Esophagus squamous epithelium (tissue), 5 donors: ENCODE measurements at regions of chr21 and their contacts with region 1.

Region 1: DNA sequence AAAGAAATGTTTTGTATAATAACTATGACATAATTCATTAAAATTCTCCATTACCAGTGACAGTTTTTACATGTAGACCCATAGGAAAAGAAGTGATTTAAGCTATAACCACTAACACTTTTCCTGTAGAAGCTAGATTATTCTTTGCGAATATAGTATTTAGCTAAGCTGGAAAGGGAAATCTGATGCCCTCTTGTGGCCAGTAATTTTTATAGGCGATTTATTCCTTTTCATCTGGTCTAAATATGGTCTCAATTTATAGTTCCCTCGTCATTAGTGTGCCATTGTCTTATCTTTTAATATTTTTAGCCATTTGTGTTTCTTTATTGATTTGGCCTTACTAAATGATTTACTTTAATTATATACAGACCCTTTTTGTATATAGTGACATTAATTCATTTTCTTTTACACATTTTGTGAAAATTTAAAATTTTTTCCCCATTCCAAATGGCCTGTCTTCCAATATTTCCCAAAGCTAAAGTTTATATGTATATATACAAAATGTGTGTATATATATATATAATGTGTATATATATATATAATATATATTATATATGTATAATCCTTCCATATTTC is 26.7 kb downstream of the BTG3 start:
- DNase-seq: no peak
- H3K4me3 ChIP-seq: no peak overlapping the region
- H3K27ac ChIP-seq: no peak overlapping the region
- H3K4me1 ChIP-seq: no peaks in the 10 kb centered on the region
- H3K27me3 ChIP-seq: no peaks in the 10 kb centered on the region
- CTCF ChIP-seq: peak; percentile 40 to 71 (median 58)
- POLR2A ChIP-seq: no peak

Region 2: GRCh38 chr21:17393413-17393812 is 192.6 kb before region 1 on chr21:
- intact Hi-C with region 1: loop called (anchors 10 kb)
- DNase-seq: no peak
- H3K4me3 ChIP-seq: no peak overlapping the region
- H3K27ac ChIP-seq: no peak overlapping the region
- H3K4me1 ChIP-seq: peaks cover 0 to 13% (median 0%) of the 10 kb centered on the region in 3 donors
- H3K27me3 ChIP-seq: no peaks in the 10 kb centered on the region
- CTCF ChIP-seq: no peak
- POLR2A ChIP-seq: no peak